ENCODE measurements at regions of chrX and their contacts with region 1.

Region 1: GRCh38 chrX:147803948-147804347 is 107.8 kb upstream of the FMR1 start:
- DNase-seq: peak; percentile 24
- ATAC-seq: peak; percentile 84
- H3K4me3 ChIP-seq: no peak overlapping the region
- H3K27ac ChIP-seq: no peak overlapping the region
- H3K4me1 ChIP-seq: no peaks in the 10 kb centered on the region
- H3K27me3 ChIP-seq: no peaks in the 10 kb centered on the region
- CTCF ChIP-seq: peak; percentile 59
- EP300 ChIP-seq: no peak
- POLR2A ChIP-seq: no peak
- RAD21 ChIP-seq: no peak

Region 2: GRCh38 chrX:145825896-145826295 is 1978.1 kb before region 1 on chrX:
- CTCF ChIA-PET with region 1: no interaction called
- POLR2A ChIA-PET with region 1: no interaction called
- in situ Hi-C with region 1: no loop called
- intact Hi-C with region 1: loop called (anchors 5 kb)
- DNase-seq: no peak
- ATAC-seq: no peak
- H3K4me3 ChIP-seq: no peak overlapping the region
- H3K27ac ChIP-seq: no peak overlapping the region
- H3K4me1 ChIP-seq: no peaks in the 10 kb centered on the region
- H3K27me3 ChIP-seq: no peaks in the 10 kb centered on the region
- CTCF ChIP-seq: no peak; the same call in 1 of the 2 replicates
- EP300 ChIP-seq: no peak
- POLR2A ChIP-seq: no peak
- RAD21 ChIP-seq: no peak

Region 3: DNA sequence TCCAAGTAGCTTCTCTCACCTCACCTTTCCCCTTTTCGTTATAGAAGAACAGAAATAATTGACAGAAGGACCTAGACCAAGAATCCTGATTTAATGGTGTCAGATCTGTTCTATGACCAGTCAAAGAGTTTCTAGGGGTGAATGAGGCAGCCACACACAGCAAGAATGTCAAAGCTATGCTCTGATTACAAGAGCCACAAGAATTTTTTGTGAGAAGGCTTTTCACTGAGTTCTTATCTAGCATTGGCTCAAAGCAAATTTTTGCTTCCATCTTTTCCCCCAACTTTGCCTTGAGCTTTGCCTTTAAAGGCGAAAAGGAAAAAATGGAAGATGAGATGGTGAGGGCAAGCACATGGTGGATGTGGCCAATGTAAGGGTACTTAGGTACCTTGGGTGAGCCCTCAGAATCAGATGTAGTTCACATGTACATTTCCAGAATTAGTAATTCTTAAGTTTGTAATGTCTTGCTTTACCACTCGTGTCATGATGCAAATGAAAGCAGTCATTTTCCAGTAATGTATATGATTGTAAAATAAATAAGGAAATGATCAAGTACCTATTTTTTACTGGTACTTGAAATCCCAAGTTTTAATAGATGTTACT is 131.3 kb after region 1 on chrX:
- CTCF ChIA-PET with region 1: no interaction called
- POLR2A ChIA-PET with region 1: no interaction called
- in situ Hi-C with region 1: no loop called
- intact Hi-C with region 1: no loop called
- DNase-seq: no peak
- ATAC-seq: no peak
- H3K4me3 ChIP-seq: no peak overlapping the region
- H3K27ac ChIP-seq: no peak overlapping the region
- H3K4me1 ChIP-seq: no peaks in the 10 kb centered on the region
- H3K27me3 ChIP-seq: no peaks in the 10 kb centered on the region
- CTCF ChIP-seq: no peak
- EP300 ChIP-seq: no peak
- POLR2A ChIP-seq: no peak
- RAD21 ChIP-seq: no peak